ENCODE measurements at regions of chr19 and their contacts with region 1.

Region 1: GRCh38 chr19:5536337-5536894 is 31.3 kb downstream of the TINCR start:
- DNase-seq: peak; percentile 70 to 91
- H3K4me3 ChIP-seq: peak overlapping the region in 3 of 4 experiments; percentile 19 to 41 (median 29); a peak in 6 of 8 replicates
- H3K27ac ChIP-seq: peak overlapping the region; percentile 41; the same call in 1 of the 2 replicates
- H3K4me1 ChIP-seq: peaks cover 2 to 15% (median 13%) of the 10 kb centered on the region in 4 experiments
- H3K27me3 ChIP-seq: no peaks in the 10 kb centered on the region; a peak in 1 of 7 replicates
- CTCF ChIP-seq: no peak
- EP300 ChIP-seq: no peak; a peak in 1 of 3 replicates
- POLR2A ChIP-seq: no peak; a peak in 1 of 3 replicates
- RAD21 ChIP-seq: 0 out of 4 replicates have a peak, but pooled peaks of 1 of the 2 experiments have one; percentile 0

Region 2: GRCh38 chr19:5487222-5487621 is 49.2 kb before region 1 on chr19:
- CTCF ChIA-PET with region 1: interaction called, 13 read pairs
- POLR2A ChIA-PET with region 1: no interaction called
- DNase-seq: no peak
- H3K4me3 ChIP-seq: no peak overlapping the region
- H3K27ac ChIP-seq: no peak overlapping the region
- H3K4me1 ChIP-seq: peaks cover 0 to 7% (median 0%) of the 10 kb centered on the region in 4 experiments; a peak in 2 of 7 replicates
- H3K27me3 ChIP-seq: peaks cover 0 to 3% (median under 1%) of the 10 kb centered on the region in 4 experiments; a peak in 4 of 7 replicates
- CTCF ChIP-seq: no peak
- EP300 ChIP-seq: no peak
- POLR2A ChIP-seq: no peak
- RAD21 ChIP-seq: no peak

Region 3: DNA sequence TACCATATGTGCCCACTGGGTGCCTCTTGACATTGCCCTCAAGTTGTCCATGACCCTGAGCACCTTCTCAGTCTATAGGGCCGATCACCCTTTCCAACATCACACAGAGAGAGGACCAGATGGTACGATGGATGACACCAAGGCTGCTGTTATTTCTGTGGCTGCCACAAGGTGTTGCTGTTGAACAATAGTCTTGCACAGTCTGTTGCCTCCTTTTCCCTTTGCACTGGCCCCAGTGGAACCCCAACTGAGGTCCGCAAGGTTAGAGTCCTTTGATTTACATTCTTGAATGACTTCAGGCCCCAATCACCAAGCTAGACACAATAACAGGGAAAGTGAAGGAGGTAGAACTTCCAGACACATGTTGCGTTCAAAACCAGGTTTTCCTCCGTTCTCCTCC is 20.7 kb before region 1 on chr19:
- CTCF ChIA-PET with region 1: interaction called, 112 read pairs
- POLR2A ChIA-PET with region 1: interaction called, 3 read pairs
- DNase-seq: peak in 1 of 2 experiments; percentile 60
- H3K4me3 ChIP-seq: no peak overlapping the region
- H3K27ac ChIP-seq: no peak overlapping the region
- H3K4me1 ChIP-seq: no peaks in the 10 kb centered on the region
- H3K27me3 ChIP-seq: no peaks in the 10 kb centered on the region; a peak in 2 of 7 replicates
- CTCF ChIP-seq: peak; percentile 65 to 87 (median 74)
- EP300 ChIP-seq: no peak
- POLR2A ChIP-seq: no peak
- RAD21 ChIP-seq: peak; percentile 73 to 81

Region 4: GRCh38 chr19:5524081-5524480 is 12.3 kb before region 1 on chr19:
- CTCF ChIA-PET with region 1: interaction called, 112 read pairs
- POLR2A ChIA-PET with region 1: interaction called, 5 read pairs
- DNase-seq: no peak
- H3K4me3 ChIP-seq: no peak overlapping the region
- H3K27ac ChIP-seq: no peak overlapping the region; the same call in 1 of the 2 replicates
- H3K4me1 ChIP-seq: peaks cover 0 to 8% (median 0%) of the 10 kb centered on the region in 4 experiments; a peak in 6 of 7 replicates
- H3K27me3 ChIP-seq: 0 out of 7 replicates have a peak, but pooled peaks cover 0 to 2% (median 0%) of the 10 kb centered on the region in 4 experiments
- CTCF ChIP-seq: no peak
- EP300 ChIP-seq: no peak
- POLR2A ChIP-seq: no peak
- RAD21 ChIP-seq: no peak

Measured in H1 (cell line).